ENCODE measurements at regions of chr10 and their contacts with region 1.

Region 1: DNA sequence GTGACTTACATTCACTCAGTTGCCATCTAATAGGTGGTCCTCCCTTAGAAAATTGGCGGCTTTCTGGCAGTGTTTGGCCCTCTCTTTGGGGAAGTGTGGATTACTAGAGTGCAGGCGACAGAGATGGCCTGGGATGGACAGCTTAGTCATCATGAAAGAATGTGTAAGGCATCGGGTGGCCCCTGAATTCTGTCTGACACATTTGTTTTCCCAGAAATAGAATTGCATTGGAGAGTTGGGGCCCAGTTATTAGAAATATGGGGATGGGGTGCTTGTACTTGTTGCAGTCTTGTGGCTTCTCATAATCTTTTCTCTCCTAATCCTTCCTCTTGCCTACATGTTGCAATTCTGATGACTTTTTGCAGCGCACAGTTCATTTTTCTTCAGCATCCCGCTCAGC is 13.8 kb downstream of the TCF7L2 start:
- DNase-seq: peak in 1 of 7 donors; percentile 32
- H3K4me3 ChIP-seq: no peak overlapping the region
- H3K27ac ChIP-seq: no peak overlapping the region
- H3K4me1 ChIP-seq: peaks cover 0 to 12% of the 10 kb centered on the region in 2 donors
- H3K27me3 ChIP-seq: no peaks in the 10 kb centered on the region
- CTCF ChIP-seq: no peak
- POLR2A ChIP-seq: no peak

Region 2: GRCh38 chr10:113019692-113020424 is 56.0 kb after region 1 on chr10:
- intact Hi-C with region 1: loop called in 1 of 2 experiments (anchors 10 kb)
- DNase-seq: no peak
- H3K4me3 ChIP-seq: no peak overlapping the region
- H3K27ac ChIP-seq: peak overlapping the region in 1 of 5 donors; percentile 58
- H3K4me1 ChIP-seq: peaks cover 17 to 25% of the 10 kb centered on the region in 2 donors
- H3K27me3 ChIP-seq: no peaks in the 10 kb centered on the region
- CTCF ChIP-seq: no peak
- POLR2A ChIP-seq: no peak